Endothelial cell of umbilical vein (primary cell): ENCODE measurements at regions of chr13 and their contacts with region 1.

Region 1: DNA sequence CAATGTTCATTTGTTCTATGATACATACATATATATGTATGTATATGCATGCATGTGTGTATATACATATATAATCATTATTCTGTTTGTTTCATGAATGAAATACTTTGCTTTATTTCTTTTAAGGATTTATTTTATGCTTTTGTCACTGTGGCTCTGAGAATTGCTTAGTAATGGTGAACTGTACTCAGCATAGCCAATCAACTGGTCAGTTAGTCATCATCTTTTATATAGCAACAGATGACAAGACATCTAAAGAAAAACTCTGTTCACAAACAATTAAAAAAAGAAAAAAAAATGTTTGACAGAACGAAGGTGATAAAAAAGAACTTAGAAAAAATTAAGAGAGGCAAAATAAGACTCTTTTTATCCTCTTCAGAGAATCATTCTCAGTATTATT is 1440.3 kb downstream of the PCDH9 start:
- DNase-seq: no peak
- H3K4me3 ChIP-seq: no peak overlapping the region
- H3K27ac ChIP-seq: no peak overlapping the region
- H3K4me1 ChIP-seq: no peaks in the 10 kb centered on the region
- H3K27me3 ChIP-seq: no peaks in the 10 kb centered on the region
- CTCF ChIP-seq: no peak
- POLR2A ChIP-seq: no peak

Region 2: GRCh38 chr13:63896321-63896720 is 1893.5 kb before region 1 on chr13:
- CTCF ChIA-PET with region 1: no interaction called
- POLR2A ChIA-PET with region 1: no interaction called
- dilution Hi-C with region 1: no loop called
- intact Hi-C with region 1: loop called (anchors 5 kb)
- DNase-seq: no peak
- H3K4me3 ChIP-seq: no peak overlapping the region
- H3K27ac ChIP-seq: no peak overlapping the region
- H3K4me1 ChIP-seq: no peaks in the 10 kb centered on the region
- H3K27me3 ChIP-seq: no peaks in the 10 kb centered on the region
- CTCF ChIP-seq: no peak
- POLR2A ChIP-seq: no peak

Region 3: GRCh38 chr13:64371045-64371444 is 1418.8 kb before region 1 on chr13:
- CTCF ChIA-PET with region 1: no interaction called
- POLR2A ChIA-PET with region 1: no interaction called
- dilution Hi-C with region 1: no loop called
- intact Hi-C with region 1: no loop called
- DNase-seq: no peak
- H3K4me3 ChIP-seq: no peak overlapping the region
- H3K27ac ChIP-seq: no peak overlapping the region
- H3K4me1 ChIP-seq: no peaks in the 10 kb centered on the region
- H3K27me3 ChIP-seq: no peaks in the 10 kb centered on the region
- CTCF ChIP-seq: no peak
- POLR2A ChIP-seq: no peak

Region 4: GRCh38 chr13:65856431-65856830 is 66.6 kb after region 1 on chr13:
- CTCF ChIA-PET with region 1: no interaction called
- POLR2A ChIA-PET with region 1: no interaction called
- dilution Hi-C with region 1: no loop called
- intact Hi-C with region 1: no loop called
- DNase-seq: no peak
- H3K4me3 ChIP-seq: no peak overlapping the region
- H3K27ac ChIP-seq: no peak overlapping the region
- H3K4me1 ChIP-seq: no peaks in the 10 kb centered on the region
- H3K27me3 ChIP-seq: no peaks in the 10 kb centered on the region
- CTCF ChIP-seq: no peak
- POLR2A ChIP-seq: no peak

Region 5: GRCh38 chr13:66021846-66022245 is 232.0 kb after region 1 on chr13:
- CTCF ChIA-PET with region 1: no interaction called
- POLR2A ChIA-PET with region 1: no interaction called
- dilution Hi-C with region 1: no loop called
- intact Hi-C with region 1: no loop called
- DNase-seq: no peak
- H3K4me3 ChIP-seq: no peak overlapping the region
- H3K27ac ChIP-seq: no peak overlapping the region
- H3K4me1 ChIP-seq: no peaks in the 10 kb centered on the region
- H3K27me3 ChIP-seq: no peaks in the 10 kb centered on the region
- CTCF ChIP-seq: no peak
- POLR2A ChIP-seq: no peak